ENCODE measurements at regions of chr10 and their contacts with region 1.

Region 1: GRCh38 chr10:58775960-58776567 is 263.4 kb downstream of the BICC1 start:
- DNase-seq: no peak
- ATAC-seq: peak; percentile 46 to 65 (median 60)
- H3K4me3 ChIP-seq: no peak overlapping the region
- H3K27ac ChIP-seq: no peak overlapping the region
- H3K4me1 ChIP-seq: no peaks in the 10 kb centered on the region
- H3K27me3 ChIP-seq: no peaks in the 10 kb centered on the region
- CTCF ChIP-seq: no peak

Region 2: GRCh38 chr10:59508296-59508695 is 732.2 kb after region 1 on chr10:
- intact Hi-C with region 1: loop called in 1 of 3 experiments (anchors 5 kb)
- DNase-seq: no peak
- ATAC-seq: no peak
- H3K4me3 ChIP-seq: no peak overlapping the region
- H3K27ac ChIP-seq: no peak overlapping the region
- H3K4me1 ChIP-seq: no peaks in the 10 kb centered on the region
- H3K27me3 ChIP-seq: no peaks in the 10 kb centered on the region
- CTCF ChIP-seq: no peak